CD8-positive, alpha-beta T cell (primary cell): ENCODE measurements at regions of chr11 and their contacts with region 1.

Region 1: DNA sequence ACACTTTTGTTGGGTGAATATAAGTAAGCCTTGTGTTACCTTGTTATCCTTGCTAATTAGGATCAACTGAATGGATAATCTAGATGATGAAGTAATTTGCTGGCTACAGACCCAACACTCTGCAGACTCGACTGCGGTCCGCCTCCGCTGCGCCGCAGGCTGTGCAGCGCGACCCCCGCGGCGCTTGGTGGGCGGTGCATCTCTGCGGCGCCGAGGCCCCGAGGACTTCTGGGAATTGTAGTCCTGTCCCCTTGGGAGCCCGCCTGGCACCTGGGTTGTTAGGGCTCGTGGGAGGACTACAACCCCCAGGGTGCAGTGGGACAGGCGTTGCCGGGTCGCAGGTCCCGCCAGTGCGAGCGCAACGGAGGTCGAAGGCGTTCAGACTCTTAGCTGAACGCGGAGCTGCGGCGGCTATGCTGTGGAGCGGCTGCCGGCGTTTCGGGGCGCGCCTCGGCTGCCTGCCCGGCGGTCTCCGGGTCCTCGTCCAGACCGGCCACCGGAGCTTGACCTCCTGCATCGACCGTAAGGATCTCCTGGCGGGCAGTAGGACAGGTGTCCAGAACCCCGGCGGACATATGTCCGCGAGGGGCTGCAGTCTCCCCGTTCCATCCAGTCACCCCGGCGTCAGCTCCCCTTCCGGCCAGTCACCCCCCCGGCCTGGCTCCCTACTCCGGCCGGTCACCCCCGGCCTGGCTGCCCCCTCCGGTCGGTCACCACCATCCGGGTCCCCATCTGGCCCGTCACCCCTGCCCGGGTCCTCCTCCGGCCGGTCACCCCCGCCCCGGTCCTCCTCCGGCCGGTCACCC is at the starts of genes ACAD8 and THYN1:
- DNase-seq: peak; percentile 92 to 98 (median 96)
- ATAC-seq: peak; percentile 99
- H3K4me3 ChIP-seq: peak within 1 kb of the TSS; percentile 88 to 91
- H3K4me3 Mint-ChIP-seq: peak within 1 kb of the TSS; percentile 92
- H3K27ac ChIP-seq: peak within 1 kb of the TSS; percentile 52 to 75
- H3K27ac Mint-ChIP-seq: peak within 1 kb of the TSS; percentile 94
- H3K4me1 ChIP-seq: peaks cover 12% of the 10 kb centered on the region
- H3K4me1 Mint-ChIP-seq: peaks cover 36% of the 10 kb centered on the region
- H3K27me3 ChIP-seq: no peaks in the 10 kb centered on the region
- H3K27me3 Mint-ChIP-seq: no peaks in the 10 kb centered on the region
- CTCF ChIP-seq: no peak
- total RNA-seq, gene ACAD8: 19.5 to 20.3 TPM
- total RNA-seq, gene THYN1: 27.1 to 31.5 TPM

Region 2: GRCh38 chr11:133956650-133957633 is 296.4 kb before region 1 on chr11 and contains the start of gene IGSF9B:
- CTCF ChIA-PET with region 1: no interaction called
- POLR2A ChIA-PET with region 1: no interaction called
- intact Hi-C with region 1: loop called in 1 of 2 experiments (anchors 10 kb)
- DNase-seq: peak; percentile 82 to 95 (median 90)
- ATAC-seq: peak; percentile 93
- H3K4me3 ChIP-seq: peak within 1 kb of the TSS; percentile 67 to 81
- H3K4me3 Mint-ChIP-seq: peak within 1 kb of the TSS; percentile 90
- H3K27ac ChIP-seq: peak within 1 kb of the TSS; percentile 62 to 64
- H3K27ac Mint-ChIP-seq: peak within 1 kb of the TSS; percentile 86
- H3K4me1 ChIP-seq: peaks cover 29% of the 10 kb centered on the region
- H3K4me1 Mint-ChIP-seq: peaks cover 40% of the 10 kb centered on the region
- H3K27me3 ChIP-seq: peaks cover 0 to 7% of the 10 kb centered on the region in 2 experiments
- H3K27me3 Mint-ChIP-seq: peaks cover 8% of the 10 kb centered on the region
- CTCF ChIP-seq: no peak
- total RNA-seq, gene IGSF9B: 10.1 to 11.6 TPM

Region 3: DNA sequence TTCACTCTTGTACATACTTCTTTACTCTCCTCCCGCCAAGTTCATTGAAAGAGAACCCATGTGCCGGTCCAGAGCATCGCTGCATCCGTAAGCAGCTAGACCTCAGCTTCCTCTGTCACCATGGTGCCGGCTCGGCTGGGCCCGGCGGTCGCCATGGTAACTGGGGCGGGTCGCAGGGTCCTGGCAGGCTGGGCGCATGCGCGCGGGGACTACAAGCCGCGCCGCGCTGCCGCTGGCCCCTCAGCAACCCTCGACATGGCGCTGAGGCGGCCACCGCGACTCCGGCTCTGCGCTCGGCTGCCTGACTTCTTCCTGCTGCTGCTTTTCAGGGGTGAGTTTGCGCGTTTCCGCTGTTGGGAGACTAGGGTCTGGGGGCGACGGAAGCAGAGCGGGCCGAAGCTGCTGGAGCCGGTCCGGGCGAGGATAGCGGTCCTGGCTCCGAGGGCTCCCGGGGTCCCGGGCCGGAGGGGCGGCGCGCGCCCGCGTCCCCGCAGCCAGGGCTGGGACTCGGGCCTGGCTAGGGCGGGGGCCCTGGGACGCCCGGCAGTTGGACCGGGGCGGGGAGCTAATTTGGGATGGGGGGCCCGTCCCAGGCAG is 184.5 kb before region 1 on chr11 and contains the start of gene JAM3:
- CTCF ChIA-PET with region 1: no interaction called
- POLR2A ChIA-PET with region 1: no interaction called
- intact Hi-C with region 1: loop called in 1 of 2 experiments (anchors 1 kb)
- DNase-seq: peak; percentile 95 to 99 (median 98)
- ATAC-seq: peak; percentile 91
- H3K4me3 ChIP-seq: peak within 1 kb of the TSS; percentile 52 to 58
- H3K4me3 Mint-ChIP-seq: peak within 1 kb of the TSS; percentile 94
- H3K27ac ChIP-seq: peak within 1 kb of the TSS in 1 of 2 experiments; percentile 50
- H3K27ac Mint-ChIP-seq: peak within 1 kb of the TSS; percentile 87
- H3K4me1 ChIP-seq: peaks cover 6% of the 10 kb centered on the region
- H3K4me1 Mint-ChIP-seq: peaks cover 17% of the 10 kb centered on the region
- H3K27me3 ChIP-seq: no peaks in the 10 kb centered on the region
- H3K27me3 Mint-ChIP-seq: peaks cover 1% of the 10 kb centered on the region
- CTCF ChIP-seq: no peak
- total RNA-seq, gene JAM3: 12.1 to 15.2 TPM

Region 4: GRCh38 chr11:134223836-134224709 is 29.3 kb before region 1 on chr11 and contains the starts of genes NCAPD3 and VPS26B:
- CTCF ChIA-PET with region 1: interaction called, 4 read pairs
- POLR2A ChIA-PET with region 1: interaction called, 36 read pairs
- intact Hi-C with region 1: loop called (anchors 1 kb)
- DNase-seq: peak; percentile 90 to 98 (median 96)
- ATAC-seq: peak; percentile 77
- H3K4me3 ChIP-seq: peak within 1 kb of the TSS; percentile 71 to 88
- H3K4me3 Mint-ChIP-seq: peak within 1 kb of the TSS; percentile 96
- H3K27ac ChIP-seq: peak within 1 kb of the TSS; percentile 84 to 96
- H3K27ac Mint-ChIP-seq: peak within 1 kb of the TSS; percentile 97
- H3K4me1 ChIP-seq: peaks cover 45% of the 10 kb centered on the region
- H3K4me1 Mint-ChIP-seq: peaks cover 65% of the 10 kb centered on the region
- H3K27me3 ChIP-seq: no peaks in the 10 kb centered on the region
- H3K27me3 Mint-ChIP-seq: no peaks in the 10 kb centered on the region
- CTCF ChIP-seq: no peak
- total RNA-seq, gene NCAPD3: 30.2 to 30.4 TPM
- total RNA-seq, gene VPS26B: 36.8 to 37.8 TPM

Region 5: GRCh38 chr11:134861490-134862104 is 608.2 kb after region 1 on chr11:
- CTCF ChIA-PET with region 1: no interaction called
- POLR2A ChIA-PET with region 1: no interaction called
- intact Hi-C with region 1: no loop called
- DNase-seq: no peak
- ATAC-seq: no peak
- H3K4me3 ChIP-seq: no peak overlapping the region
- H3K4me3 Mint-ChIP-seq: no peak overlapping the region
- H3K27ac ChIP-seq: no peak overlapping the region
- H3K27ac Mint-ChIP-seq: no peak overlapping the region
- H3K4me1 ChIP-seq: no peaks in the 10 kb centered on the region
- H3K4me1 Mint-ChIP-seq: no peaks in the 10 kb centered on the region
- H3K27me3 ChIP-seq: no peaks in the 10 kb centered on the region
- H3K27me3 Mint-ChIP-seq: peaks cover 7% of the 10 kb centered on the region
- CTCF ChIP-seq: no peak